Activated CD4-positive, alpha-beta T cell treated with anti-CD3 and anti-CD28 coated beads, Interleukin-2, amount 10 ng/mL, durations not matched to agents 24 days and 14 days (primary cell): ENCODE measurements at regions of chr11 and their contacts with region 1.

Region 1: GRCh38 chr11:102495161-102496042 is 35.1 kb downstream of the MMP7 start:
- DNase-seq: peak; percentile 86
- H3K4me3 Mint-ChIP-seq: no peak overlapping the region
- H3K27ac Mint-ChIP-seq: peak overlapping the region; percentile 24
- H3K4me1 Mint-ChIP-seq: peaks cover 27% of the 10 kb centered on the region
- H3K27me3 Mint-ChIP-seq: peaks cover 14% of the 10 kb centered on the region

Region 2: GRCh38 chr11:102341844-102342318 is 153.5 kb before region 1 on chr11:
- intact Hi-C with region 1: loop called (anchors 1 kb)
- DNase-seq: peak; percentile 92
- H3K4me3 Mint-ChIP-seq: no peak overlapping the region
- H3K27ac Mint-ChIP-seq: no peak overlapping the region
- H3K4me1 Mint-ChIP-seq: peaks cover 28% of the 10 kb centered on the region
- H3K27me3 Mint-ChIP-seq: no peaks in the 10 kb centered on the region

Region 3: GRCh38 chr11:102367364-102367763 is 128.0 kb before region 1 on chr11:
- intact Hi-C with region 1: loop called (anchors 1 kb)
- DNase-seq: no peak
- H3K4me3 Mint-ChIP-seq: no peak overlapping the region
- H3K27ac Mint-ChIP-seq: peak overlapping the region; percentile 7
- H3K4me1 Mint-ChIP-seq: peaks cover 26% of the 10 kb centered on the region
- H3K27me3 Mint-ChIP-seq: no peaks in the 10 kb centered on the region

Region 4: GRCh38 chr11:102390667-102391465 is 104.5 kb before region 1 on chr11:
- intact Hi-C with region 1: loop called (anchors 1 kb)
- DNase-seq: peak; percentile 87
- H3K4me3 Mint-ChIP-seq: no peak overlapping the region
- H3K27ac Mint-ChIP-seq: no peak overlapping the region
- H3K4me1 Mint-ChIP-seq: peaks cover 31% of the 10 kb centered on the region
- H3K27me3 Mint-ChIP-seq: no peaks in the 10 kb centered on the region

Region 5: DNA sequence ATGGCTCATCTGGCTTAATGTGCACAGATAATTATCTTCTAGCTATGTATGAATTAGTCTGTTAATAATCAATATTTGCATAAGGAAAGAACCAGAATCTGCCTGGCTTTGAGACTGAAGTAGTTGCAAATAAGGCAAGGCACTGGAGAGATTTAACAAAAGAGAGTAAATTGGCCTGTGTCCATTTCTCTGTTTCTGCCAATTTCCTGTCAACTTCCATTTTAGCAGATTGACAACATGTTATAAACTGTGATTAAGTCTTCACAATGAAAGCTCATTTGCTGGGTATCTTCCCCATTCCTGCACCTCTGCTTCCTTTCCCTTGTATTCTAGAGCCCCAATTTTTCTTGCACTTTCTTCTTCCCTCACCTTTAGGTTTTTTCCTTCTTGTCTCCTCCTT is 37.5 kb before region 1 on chr11:
- intact Hi-C with region 1: loop called (anchors 2 kb)
- DNase-seq: no peak
- H3K4me3 Mint-ChIP-seq: peak overlapping the region; percentile 57
- H3K27ac Mint-ChIP-seq: peak overlapping the region; percentile 61
- H3K4me1 Mint-ChIP-seq: peaks cover 67% of the 10 kb centered on the region
- H3K27me3 Mint-ChIP-seq: no peaks in the 10 kb centered on the region

Region 6: DNA sequence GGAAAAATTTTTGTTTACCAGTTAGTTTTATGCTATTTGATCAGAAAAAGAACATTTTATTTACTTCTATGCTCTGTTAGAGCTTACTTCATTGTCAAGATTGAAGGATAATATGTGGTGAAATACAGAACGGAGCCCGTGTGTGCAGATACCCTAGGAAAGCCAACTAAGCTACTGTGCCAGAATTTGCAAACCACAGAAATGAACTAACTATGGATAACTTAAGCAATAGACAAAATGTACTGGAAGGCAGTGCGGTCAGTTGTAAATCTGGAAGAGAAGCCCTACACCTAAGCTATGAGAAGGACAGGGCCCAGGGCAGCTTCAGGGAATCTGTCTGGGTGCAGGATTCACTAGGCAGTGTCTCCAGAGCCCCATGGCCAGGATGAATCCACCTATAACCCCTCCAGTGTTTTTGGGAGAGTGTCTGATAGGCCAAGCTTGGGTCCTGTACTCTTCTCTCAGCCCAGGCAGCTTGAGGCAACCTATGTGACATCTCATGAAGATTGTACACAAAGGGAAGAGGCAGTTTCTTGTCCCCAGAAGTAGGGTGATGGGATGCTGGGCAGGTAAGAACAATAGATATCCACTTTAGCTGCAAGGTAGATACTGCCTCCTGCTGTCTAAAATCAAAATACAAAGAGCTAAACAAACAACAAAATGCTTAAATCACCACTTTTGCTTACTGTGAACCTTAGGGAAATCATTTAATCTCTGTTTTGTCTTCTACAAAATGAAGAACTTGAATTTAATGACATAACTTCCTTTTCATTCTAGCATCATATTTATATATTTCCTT is 23.1 kb after region 1 on chr11:
- intact Hi-C with region 1: no loop called
- DNase-seq: no peak
- H3K4me3 Mint-ChIP-seq: no peak overlapping the region
- H3K27ac Mint-ChIP-seq: no peak overlapping the region
- H3K4me1 Mint-ChIP-seq: no peaks in the 10 kb centered on the region
- H3K27me3 Mint-ChIP-seq: peaks cover 20% of the 10 kb centered on the region

Region 7: GRCh38 chr11:102534261-102534872 is 39.0 kb after region 1 on chr11:
- intact Hi-C with region 1: no loop called
- DNase-seq: no peak
- H3K4me3 Mint-ChIP-seq: no peak overlapping the region
- H3K27ac Mint-ChIP-seq: no peak overlapping the region
- H3K4me1 Mint-ChIP-seq: peaks cover 5% of the 10 kb centered on the region
- H3K27me3 Mint-ChIP-seq: peaks cover 22% of the 10 kb centered on the region

Region 8: GRCh38 chr11:102614485-102614884 is 119.1 kb after region 1 on chr11:
- intact Hi-C with region 1: loop called (anchors 1 kb)
- DNase-seq: no peak
- H3K4me3 Mint-ChIP-seq: no peak overlapping the region
- H3K27ac Mint-ChIP-seq: no peak overlapping the region
- H3K4me1 Mint-ChIP-seq: peaks cover 15% of the 10 kb centered on the region
- H3K27me3 Mint-ChIP-seq: peaks cover 17% of the 10 kb centered on the region

Region 9: DNA sequence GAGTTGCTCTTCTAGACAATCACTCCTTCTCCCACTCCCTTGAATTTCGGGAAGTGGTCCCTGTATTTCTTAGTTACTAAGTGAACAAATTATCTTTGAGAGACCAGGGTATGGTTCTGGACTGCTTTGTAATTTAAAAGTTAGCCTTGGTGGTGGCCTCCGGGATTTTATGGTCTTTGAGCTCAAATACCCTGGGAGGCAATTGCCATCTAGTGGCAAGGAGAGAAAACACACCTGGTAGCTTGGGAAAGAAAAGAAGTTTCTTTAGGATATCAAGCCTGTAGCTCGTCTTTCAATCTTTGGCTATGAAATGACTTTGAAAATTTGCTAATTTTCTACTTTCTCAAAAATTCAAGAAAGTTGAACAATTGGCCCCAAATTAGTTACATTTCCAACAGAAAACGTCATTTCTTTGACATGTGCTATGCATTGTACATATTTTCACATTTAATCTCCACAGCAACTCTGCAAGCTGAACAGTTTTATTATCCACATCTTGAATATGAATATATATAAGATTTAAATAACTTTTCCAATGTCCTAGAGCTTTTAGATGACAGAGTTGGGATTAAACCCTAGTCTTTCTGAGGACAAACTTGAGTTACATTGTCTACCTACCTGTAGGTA is 171.0 kb after region 1 on chr11:
- intact Hi-C with region 1: loop called (anchors 1 kb)
- DNase-seq: peak; percentile 71
- H3K4me3 Mint-ChIP-seq: no peak overlapping the region
- H3K27ac Mint-ChIP-seq: no peak overlapping the region
- H3K4me1 Mint-ChIP-seq: no peaks in the 10 kb centered on the region
- H3K27me3 Mint-ChIP-seq: peaks cover 12% of the 10 kb centered on the region